Right ventricle myocardium inferior (tissue), 1 donor: ENCODE measurements at regions of chr1 and their contacts with region 1.

Region 1: GRCh38 chr1:101288491-101288944 is 51.7 kb downstream of the S1PR1 start:
- DNase-seq: no peak
- ATAC-seq: peak; percentile 88

Region 2: DNA sequence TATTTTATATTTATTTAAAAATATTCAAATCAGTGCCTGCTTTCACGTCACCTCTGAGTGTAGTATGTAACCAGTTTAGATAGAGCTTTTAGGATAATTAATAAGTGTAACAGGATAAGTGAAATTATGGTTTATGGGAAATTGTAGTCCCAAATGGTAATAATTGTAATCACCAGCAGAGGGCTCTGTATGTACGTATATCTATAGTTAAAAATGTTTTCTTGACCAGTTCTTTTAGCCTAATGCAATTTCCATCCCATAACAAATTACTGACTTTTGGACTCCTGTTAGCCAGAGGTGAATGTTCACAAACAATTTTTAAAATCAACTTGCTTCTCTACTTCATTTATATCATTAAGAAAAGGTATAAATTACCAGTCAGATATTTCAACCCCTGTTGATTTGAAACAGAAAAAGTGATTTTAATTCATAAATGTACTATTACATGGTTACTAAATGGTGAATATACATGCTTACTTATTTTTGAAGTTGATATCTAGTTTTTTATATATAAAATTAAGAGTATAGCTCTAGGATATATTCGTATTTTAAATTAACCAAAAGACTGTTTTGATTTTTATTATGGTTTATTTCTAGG is 367.3 kb before region 1 on chr1:
- intact Hi-C with region 1: loop called (anchors 1 kb)
- DNase-seq: no peak
- ATAC-seq: no peak

Region 3: DNA sequence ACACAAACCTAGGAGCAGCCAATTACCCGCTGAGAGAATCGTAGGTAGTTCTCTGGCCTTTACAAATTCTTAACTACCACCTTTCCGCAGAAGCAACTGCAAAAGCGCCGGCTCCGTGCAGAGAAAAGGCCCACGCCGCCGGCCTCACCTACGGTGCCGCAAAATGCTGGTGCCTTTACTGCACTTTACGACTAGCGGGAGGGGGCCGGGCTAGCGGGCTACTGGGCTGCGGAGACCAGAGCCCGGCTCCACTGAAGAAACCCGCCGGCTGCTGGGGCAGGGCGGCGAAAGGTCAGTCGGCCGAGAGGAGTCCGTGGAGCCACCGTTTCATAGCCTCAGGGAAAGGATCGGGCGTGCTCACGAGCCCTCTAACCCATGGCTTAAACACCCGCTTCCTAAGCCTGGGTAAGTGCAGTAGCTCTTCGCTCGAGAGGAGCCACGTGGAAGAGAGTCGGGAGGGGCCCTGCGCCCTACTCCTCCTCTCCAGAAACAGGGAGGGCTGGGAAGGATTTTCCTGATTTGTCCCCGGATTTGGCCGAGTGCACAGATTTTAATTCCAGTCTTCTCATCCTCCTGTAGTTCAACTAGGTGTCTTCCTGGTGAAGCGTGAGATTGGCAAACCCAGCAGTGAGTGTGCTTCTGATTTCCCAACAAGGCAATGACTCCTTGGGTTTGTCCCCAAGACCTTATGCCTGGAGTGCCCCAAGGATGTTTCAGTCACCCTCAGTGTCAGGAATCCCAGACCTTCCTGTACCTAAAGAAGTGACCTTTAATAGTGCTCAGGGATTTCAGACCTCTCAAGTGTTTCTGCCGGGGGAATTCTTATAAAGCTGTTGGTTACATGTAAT is 262.6 kb before region 1 on chr1 and contains the start of gene DPH5:
- intact Hi-C with region 1: no loop called
- DNase-seq: peak; percentile 96
- ATAC-seq: peak; percentile 98
- total RNA-seq, gene DPH5: 35.4 TPM

Region 4: DNA sequence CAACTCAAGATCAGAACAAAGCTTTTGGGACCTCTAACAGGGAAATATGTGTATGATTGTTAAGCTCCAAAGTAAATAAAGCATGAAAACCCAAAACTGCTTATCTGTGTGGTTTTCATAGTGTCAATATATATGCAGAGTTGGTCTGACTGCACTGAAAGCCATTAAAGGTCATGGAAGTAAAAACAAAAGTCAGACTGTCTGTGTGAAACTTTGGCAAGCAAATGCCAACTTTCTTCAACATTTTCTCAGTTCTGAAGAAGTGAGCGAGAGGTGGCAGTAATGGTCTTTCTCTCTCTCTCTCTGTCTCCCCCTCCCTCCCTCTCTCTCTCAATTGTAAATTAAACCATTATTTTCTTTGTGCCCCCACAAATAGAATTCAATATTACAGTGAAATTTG is 151.8 kb before region 1 on chr1:
- intact Hi-C with region 1: loop called (anchors 2 kb)
- DNase-seq: no peak
- ATAC-seq: no peak

Region 5: DNA sequence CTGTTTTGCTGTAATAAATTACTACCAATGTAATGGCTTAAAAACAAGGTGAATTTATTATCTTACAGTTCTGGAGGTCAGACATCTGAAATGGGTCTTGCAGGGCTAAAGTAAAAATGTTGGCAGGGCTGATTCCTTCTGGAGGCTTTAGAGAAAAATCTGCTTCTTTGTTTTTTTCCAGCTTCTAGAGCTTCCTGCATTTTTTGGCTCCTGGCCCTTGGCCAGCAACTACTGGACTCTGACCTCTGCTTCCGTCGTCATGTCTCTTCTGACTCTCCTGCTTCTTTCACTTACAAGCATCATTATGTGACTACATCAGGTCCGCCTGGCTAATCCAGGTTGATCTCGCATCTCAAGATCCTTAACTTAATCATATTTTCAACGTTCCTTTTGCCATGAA is 299.2 kb after region 1 on chr1:
- intact Hi-C with region 1: no loop called
- DNase-seq: peak; percentile 53
- ATAC-seq: no peak